ENCODE measurements at regions of chr9 and their contacts with region 1.

Region 1: DNA sequence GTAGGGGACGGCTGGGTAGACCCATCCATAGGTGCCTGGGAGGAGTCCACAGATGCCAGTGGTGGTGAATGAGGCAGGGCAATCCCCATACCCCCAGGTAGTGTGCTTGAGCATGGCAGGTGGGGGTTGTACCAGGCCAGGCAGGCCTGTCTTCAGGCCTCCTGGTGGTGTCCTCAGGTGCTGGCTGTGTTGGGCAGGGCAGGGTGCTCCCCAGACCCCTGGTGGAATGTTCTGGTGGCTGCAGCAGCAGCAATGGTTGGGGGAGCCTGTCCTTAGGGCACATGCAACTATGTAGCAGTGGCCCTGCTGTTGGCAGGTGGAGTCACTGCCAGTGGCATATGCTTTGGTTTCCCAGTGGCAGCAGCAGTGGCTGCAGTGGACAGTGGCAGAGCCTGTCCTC is 10.0 kb downstream of the ALG2 start:
- DNase-seq: no peak
- H3K4me3 ChIP-seq: no peak overlapping the region
- H3K27ac ChIP-seq: no peak overlapping the region
- H3K4me1 ChIP-seq: no peaks in the 10 kb centered on the region
- H3K27me3 ChIP-seq: no peaks in the 10 kb centered on the region
- CTCF ChIP-seq: no peak

Region 2: GRCh38 chr9:98851730-98852459 is 359.8 kb before region 1 on chr9:
- intact Hi-C with region 1: no loop called
- DNase-seq: no peak
- H3K4me3 ChIP-seq: no peak overlapping the region
- H3K27ac ChIP-seq: no peak overlapping the region
- H3K4me1 ChIP-seq: no peaks in the 10 kb centered on the region
- H3K27me3 ChIP-seq: no peaks in the 10 kb centered on the region
- CTCF ChIP-seq: no peak

Region 3: DNA sequence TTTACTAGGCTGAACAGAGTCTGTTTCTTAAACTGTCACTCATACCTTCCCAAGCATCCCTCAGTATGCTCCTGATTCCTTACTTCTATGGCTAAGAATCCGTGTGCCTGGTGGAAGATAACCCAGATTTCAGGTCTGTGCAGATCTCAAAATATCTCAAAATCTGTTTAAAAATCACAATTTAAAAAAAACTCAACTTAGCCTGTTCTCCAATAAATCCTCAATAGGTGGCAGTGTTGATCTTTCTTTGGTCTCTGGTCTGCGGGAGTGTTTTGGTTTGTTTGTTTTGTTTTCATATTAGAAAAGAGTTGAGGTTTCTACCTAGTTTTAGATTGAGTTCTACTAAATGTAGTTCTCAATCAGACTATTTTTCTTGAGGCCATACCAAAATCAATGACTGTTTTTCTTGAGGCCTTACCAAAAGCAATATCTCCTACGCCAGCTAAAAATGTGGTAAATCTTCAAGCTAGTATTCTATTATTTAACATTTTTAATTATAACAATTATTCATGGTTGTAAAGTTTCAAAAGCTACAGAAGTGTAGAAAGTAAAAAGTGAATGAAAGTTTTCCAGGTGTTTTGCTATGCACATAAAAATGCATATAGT is 48.9 kb before region 1 on chr9:
- intact Hi-C with region 1: loop called (anchors 5 kb)
- DNase-seq: no peak
- H3K4me3 ChIP-seq: no peak overlapping the region
- H3K27ac ChIP-seq: no peak overlapping the region
- H3K4me1 ChIP-seq: no peaks in the 10 kb centered on the region
- H3K27me3 ChIP-seq: no peaks in the 10 kb centered on the region
- CTCF ChIP-seq: peak; percentile 32